Vagina (tissue), 2 donors: ENCODE measurements at regions of chr9 and their contacts with region 1.

Region 1: GRCh38 chr9:130770679-130771442 is 64.2 kb upstream of the ABL1 start:
- DNase-seq: no peak
- H3K4me3 ChIP-seq: no peak overlapping the region
- H3K27ac ChIP-seq: no peak overlapping the region
- H3K4me1 ChIP-seq: peaks cover 11% of the 10 kb centered on the region
- H3K27me3 ChIP-seq: no peaks in the 10 kb centered on the region
- CTCF ChIP-seq: peak; percentile 51 to 76 (median 70)
- POLR2A ChIP-seq: no peak

Region 2: DNA sequence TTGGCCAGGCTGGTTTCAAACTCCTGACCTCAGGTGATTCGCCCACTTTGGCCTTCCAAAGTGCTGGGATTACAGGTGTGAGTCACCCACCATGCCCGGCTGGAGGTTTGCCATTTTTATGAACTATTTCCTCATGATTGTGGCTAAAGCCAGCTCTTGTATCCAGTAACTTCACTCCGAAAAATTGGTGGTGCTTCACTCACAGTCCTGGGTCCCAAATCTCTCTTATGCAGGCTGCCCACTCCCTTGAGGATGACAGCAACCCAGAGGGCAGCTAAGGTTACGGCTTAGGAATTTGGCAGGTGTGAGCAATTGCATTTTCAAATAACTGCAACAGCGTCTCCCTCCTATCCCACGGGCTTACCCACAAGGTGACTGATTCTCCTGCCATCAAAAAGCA is 214.9 kb before region 1 on chr9:
- intact Hi-C with region 1: no loop called
- DNase-seq: no peak
- H3K4me3 ChIP-seq: no peak overlapping the region
- H3K27ac ChIP-seq: no peak overlapping the region
- H3K4me1 ChIP-seq: no peaks in the 10 kb centered on the region
- H3K27me3 ChIP-seq: no peaks in the 10 kb centered on the region
- CTCF ChIP-seq: no peak
- POLR2A ChIP-seq: no peak

Region 3: DNA sequence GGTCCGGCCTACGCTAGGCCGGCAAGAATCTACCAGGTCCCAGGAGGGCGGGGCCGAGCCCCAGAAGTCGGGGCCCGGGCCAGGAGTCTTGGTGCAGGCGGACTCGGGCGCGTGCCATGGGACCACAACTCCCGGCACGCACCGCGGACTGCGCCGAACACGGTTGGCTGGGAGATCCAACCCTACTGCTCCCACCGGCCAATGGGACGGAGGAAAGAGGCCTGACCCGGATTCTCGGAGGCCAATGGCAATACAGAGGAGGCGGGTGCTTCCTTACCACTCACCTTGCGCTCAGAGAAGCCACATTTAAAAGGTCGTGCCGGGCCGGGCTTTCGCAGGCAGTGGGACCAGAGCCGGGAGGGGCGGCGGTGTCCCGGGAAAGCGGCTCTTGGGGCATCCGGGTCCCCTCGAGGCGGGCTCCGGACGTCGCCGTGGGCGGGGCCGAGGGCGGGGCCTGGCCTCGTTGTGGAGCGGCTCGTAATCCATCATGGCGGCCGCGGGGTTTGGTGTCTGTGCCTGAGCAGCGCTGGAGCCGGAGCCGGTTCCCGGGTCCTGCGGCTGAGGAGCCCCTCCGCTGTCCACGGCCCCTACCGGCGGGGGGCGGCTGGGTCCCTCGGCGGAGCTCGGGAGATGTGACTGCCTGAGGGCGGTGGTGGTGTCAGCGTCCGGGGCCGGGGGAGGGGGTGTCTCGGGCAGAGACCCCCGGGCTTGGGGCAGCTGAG is 58.1 kb before region 1 on chr9:
- intact Hi-C with region 1: loop called (anchors 5 kb)
- DNase-seq: peak; percentile 98 to 99
- H3K4me3 ChIP-seq: peak overlapping the region; percentile 85 to 99
- H3K27ac ChIP-seq: peak overlapping the region; percentile 95
- H3K4me1 ChIP-seq: peaks cover 46% of the 10 kb centered on the region
- H3K27me3 ChIP-seq: no peaks in the 10 kb centered on the region
- CTCF ChIP-seq: no peak
- POLR2A ChIP-seq: no peak

Region 4: GRCh38 chr9:130866474-130866965 is 95.7 kb after region 1 on chr9:
- intact Hi-C with region 1: loop called (anchors 5 kb)
- DNase-seq: no peak
- H3K4me3 ChIP-seq: no peak overlapping the region
- H3K27ac ChIP-seq: no peak overlapping the region
- H3K4me1 ChIP-seq: peaks cover 40% of the 10 kb centered on the region
- H3K27me3 ChIP-seq: no peaks in the 10 kb centered on the region
- CTCF ChIP-seq: peak; percentile 61 to 74 (median 67)
- POLR2A ChIP-seq: no peak